ENCODE measurements at regions of chr17 and their contacts with region 1.

Region 1: DNA sequence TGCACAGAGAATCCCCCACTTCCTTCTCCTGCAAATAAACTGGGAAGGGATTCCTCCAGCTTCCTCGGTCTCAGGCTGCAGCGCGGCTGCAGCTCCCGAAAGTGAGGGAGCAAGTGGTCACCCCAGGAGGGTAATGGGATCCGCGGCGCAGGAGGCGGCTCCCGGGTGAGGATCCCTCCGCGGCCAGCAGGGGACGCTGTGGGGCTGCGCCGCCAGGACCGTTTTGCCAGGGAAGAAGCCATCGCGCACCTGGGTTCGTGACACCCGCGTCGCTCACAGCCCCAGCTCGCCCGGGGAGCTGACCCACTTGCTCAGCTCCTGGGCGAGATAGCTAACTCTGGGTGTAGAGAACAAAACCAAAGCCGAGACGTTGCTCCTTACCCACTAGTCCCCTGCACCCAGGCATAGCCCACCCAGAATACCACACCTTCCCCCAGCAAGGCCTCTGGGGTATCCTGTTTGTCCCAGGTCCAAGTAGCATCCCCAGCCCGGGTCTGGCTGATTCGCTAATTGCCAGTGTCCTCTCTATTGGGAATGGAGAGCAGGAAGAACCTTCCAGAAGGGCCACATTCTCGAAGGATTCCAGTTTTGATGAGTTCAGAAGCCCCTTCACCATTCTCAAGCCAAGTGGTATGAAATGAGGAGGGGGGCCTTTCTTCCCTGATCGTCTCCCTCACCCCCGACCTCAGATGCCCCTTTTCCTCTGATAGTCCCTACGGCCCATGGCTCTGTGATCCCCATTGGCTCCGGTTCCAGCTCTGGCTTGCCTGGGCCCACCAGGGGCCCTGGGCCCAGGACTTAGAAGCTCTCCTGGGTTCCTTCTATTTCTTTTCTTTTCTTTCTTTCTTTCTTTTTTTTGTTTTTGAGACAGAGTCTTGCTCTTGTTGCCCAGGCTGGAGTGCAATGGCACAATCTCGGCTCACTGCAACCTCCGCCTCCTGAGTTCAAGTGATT is 14.1 kb downstream of the CYGB start:
- DNase-seq: peak; percentile 72
- H3K4me3 Mint-ChIP-seq: no peak overlapping the region
- H3K27ac Mint-ChIP-seq: no peak overlapping the region
- H3K4me1 Mint-ChIP-seq: peaks cover 8% of the 10 kb centered on the region
- H3K27me3 Mint-ChIP-seq: peaks cover 8% of the 10 kb centered on the region

Region 2: GRCh38 chr17:76473541-76473985 is 49.8 kb before region 1 on chr17:
- intact Hi-C with region 1: no loop called
- DNase-seq: no peak
- H3K4me3 Mint-ChIP-seq: no peak overlapping the region
- H3K27ac Mint-ChIP-seq: no peak overlapping the region
- H3K4me1 Mint-ChIP-seq: no peaks in the 10 kb centered on the region
- H3K27me3 Mint-ChIP-seq: no peaks in the 10 kb centered on the region

Region 3: GRCh38 chr17:76547184-76547641 is 23.9 kb after region 1 on chr17:
- intact Hi-C with region 1: loop called (anchors 1 kb)
- DNase-seq: peak; percentile 35
- H3K4me3 Mint-ChIP-seq: no peak overlapping the region
- H3K27ac Mint-ChIP-seq: no peak overlapping the region
- H3K4me1 Mint-ChIP-seq: peaks cover 4% of the 10 kb centered on the region
- H3K27me3 Mint-ChIP-seq: peaks cover 8% of the 10 kb centered on the region

Region 4: GRCh38 chr17:76623271-76624146 is 100.1 kb after region 1 on chr17:
- intact Hi-C with region 1: loop called (anchors 1 kb)
- DNase-seq: peak; percentile 65
- H3K4me3 Mint-ChIP-seq: no peak overlapping the region
- H3K27ac Mint-ChIP-seq: no peak overlapping the region
- H3K4me1 Mint-ChIP-seq: peaks cover 8% of the 10 kb centered on the region
- H3K27me3 Mint-ChIP-seq: peaks cover 11% of the 10 kb centered on the region

Region 5: DNA sequence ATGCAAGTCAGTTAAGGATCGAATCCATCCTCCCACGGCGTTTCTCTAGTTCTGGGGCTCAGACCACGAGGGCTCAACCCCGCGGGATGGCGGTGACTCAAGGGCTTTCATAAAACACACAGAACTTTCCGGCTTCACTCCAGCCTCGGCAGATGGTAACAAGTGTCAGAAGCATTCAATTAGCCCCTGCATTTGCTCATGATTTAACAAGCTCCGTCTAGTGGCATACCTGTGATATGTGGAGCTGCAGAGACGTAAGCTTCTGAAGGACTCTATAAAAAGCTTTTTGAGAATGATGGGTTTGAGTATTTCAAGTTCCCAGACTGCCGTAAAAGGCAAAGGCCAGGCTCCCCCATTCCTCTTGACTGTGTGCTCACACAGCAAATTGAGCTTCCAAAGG is 526.1 kb after region 1 on chr17:
- intact Hi-C with region 1: no loop called
- DNase-seq: no peak
- H3K4me3 Mint-ChIP-seq: no peak overlapping the region
- H3K27ac Mint-ChIP-seq: no peak overlapping the region
- H3K4me1 Mint-ChIP-seq: no peaks in the 10 kb centered on the region
- H3K27me3 Mint-ChIP-seq: peaks cover 2% of the 10 kb centered on the region